ENCODE measurements at regions of chr5 and their contacts with region 1.

Region 1: GRCh38 chr5:107571621-107572536 is 98.9 kb downstream of the EFNA5 start:
- DNase-seq: peak; percentile 97
- H3K4me3 ChIP-seq: peak overlapping the region in 2 of 3 experiments; percentile 31 to 59
- H3K27ac ChIP-seq: peak overlapping the region; percentile 88
- H3K4me1 ChIP-seq: peaks cover 36% of the 10 kb centered on the region
- H3K27me3 ChIP-seq: no peaks in the 10 kb centered on the region
- CTCF ChIP-seq: peak; percentile 93 to 94
- POLR2A ChIP-seq: no peak

Region 2: GRCh38 chr5:106121972-106122605 is 1449.8 kb before region 1 on chr5:
- CTCF ChIA-PET with region 1: interaction called, 3 read pairs
- POLR2A ChIA-PET with region 1: no interaction called
- dilution Hi-C with region 1: no loop called
- intact Hi-C with region 1: loop called (anchors 2 kb)
- DNase-seq: no peak
- H3K4me3 ChIP-seq: no peak overlapping the region
- H3K27ac ChIP-seq: no peak overlapping the region
- H3K4me1 ChIP-seq: no peaks in the 10 kb centered on the region
- H3K27me3 ChIP-seq: no peaks in the 10 kb centered on the region
- CTCF ChIP-seq: peak; percentile 60 to 70
- POLR2A ChIP-seq: no peak

Region 3: DNA sequence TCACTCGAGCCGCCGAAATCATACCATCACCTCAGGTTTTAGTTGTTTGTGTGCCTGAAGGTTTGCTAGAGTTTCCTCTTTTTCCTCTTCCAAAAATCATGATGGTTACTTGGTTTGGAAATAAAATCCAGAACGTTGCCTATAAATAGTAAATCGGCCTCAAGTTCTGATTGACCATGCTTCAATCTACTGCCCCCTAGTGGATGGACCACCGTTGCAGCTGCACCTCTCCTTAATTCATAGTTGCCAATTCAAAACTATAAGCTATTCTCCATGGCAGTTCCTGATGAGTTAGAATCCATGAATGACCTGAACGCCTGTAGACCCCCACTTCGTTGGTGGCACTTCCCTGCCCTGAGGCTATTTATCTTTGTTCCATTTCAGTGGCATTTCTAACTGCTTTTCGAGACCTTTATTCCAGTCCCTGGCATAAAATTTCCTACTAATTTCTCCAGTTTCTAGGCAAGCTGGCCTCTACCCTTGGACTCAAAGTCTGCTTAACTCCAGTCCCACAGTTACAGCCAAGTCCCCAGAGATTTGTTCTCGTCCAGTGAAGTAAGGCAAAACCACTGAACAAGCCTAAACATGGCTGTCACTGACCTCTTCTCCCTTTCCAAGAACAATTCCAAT is 323.7 kb before region 1 on chr5:
- CTCF ChIA-PET with region 1: interaction called, 24 read pairs
- POLR2A ChIA-PET with region 1: no interaction called
- dilution Hi-C with region 1: no loop called
- intact Hi-C with region 1: loop called (anchors 1 kb)
- DNase-seq: peak; percentile 69
- H3K4me3 ChIP-seq: no peak overlapping the region
- H3K27ac ChIP-seq: no peak overlapping the region
- H3K4me1 ChIP-seq: no peaks in the 10 kb centered on the region
- H3K27me3 ChIP-seq: no peaks in the 10 kb centered on the region
- CTCF ChIP-seq: peak; percentile 77 to 79
- POLR2A ChIP-seq: no peak

Region 4: GRCh38 chr5:107322936-107323335 is 248.9 kb before region 1 on chr5:
- CTCF ChIA-PET with region 1: interaction called, 20 read pairs
- POLR2A ChIA-PET with region 1: no interaction called
- dilution Hi-C with region 1: no loop called
- intact Hi-C with region 1: loop called (anchors 1 kb)
- DNase-seq: peak; percentile 57
- H3K4me3 ChIP-seq: no peak overlapping the region
- H3K27ac ChIP-seq: no peak overlapping the region
- H3K4me1 ChIP-seq: peaks cover 24% of the 10 kb centered on the region
- H3K27me3 ChIP-seq: no peaks in the 10 kb centered on the region
- CTCF ChIP-seq: no peak
- POLR2A ChIP-seq: no peak

Region 5: DNA sequence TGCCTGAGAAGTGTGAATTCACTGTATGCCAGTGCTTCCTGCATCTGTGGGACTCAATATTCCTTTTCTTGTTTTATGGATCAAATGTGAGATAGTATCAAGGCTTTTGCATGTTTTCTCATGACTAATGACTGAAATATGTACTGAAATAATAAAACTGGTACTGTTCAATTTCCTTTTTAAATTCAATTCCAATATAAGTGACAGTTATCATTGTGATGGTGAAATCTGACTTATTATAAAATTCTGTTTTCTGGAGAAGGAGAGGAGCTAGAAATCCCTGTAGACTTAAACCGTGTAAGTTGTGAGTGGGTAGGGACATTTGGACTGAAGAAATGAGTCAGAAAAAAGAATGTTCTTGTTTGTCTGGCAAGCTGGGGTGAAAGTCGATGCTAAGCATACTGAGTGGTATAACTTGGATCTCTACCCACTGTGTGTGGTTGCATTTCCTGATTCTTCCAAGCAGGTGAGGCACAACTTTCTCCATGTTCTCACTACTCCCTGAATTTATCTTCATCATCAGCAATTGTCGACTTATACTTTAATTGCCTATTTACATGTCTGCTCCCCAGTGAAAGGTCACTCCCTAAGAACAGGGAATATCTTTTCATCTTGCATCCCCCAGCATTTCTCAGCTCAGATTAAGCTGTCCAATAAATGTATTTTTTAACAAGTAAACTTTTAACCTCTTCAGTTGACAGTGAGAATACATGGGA is 146.2 kb before region 1 on chr5:
- CTCF ChIA-PET with region 1: interaction called, 41 read pairs
- POLR2A ChIA-PET with region 1: no interaction called
- dilution Hi-C with region 1: no loop called
- intact Hi-C with region 1: loop called (anchors 1 kb)
- DNase-seq: peak; percentile 93
- H3K4me3 ChIP-seq: peak overlapping the region in 1 of 3 experiments; percentile 22
- H3K27ac ChIP-seq: peak overlapping the region; percentile 83
- H3K4me1 ChIP-seq: peaks cover 50% of the 10 kb centered on the region
- H3K27me3 ChIP-seq: no peaks in the 10 kb centered on the region
- CTCF ChIP-seq: no peak
- POLR2A ChIP-seq: peak; percentile 59

Region 6: DNA sequence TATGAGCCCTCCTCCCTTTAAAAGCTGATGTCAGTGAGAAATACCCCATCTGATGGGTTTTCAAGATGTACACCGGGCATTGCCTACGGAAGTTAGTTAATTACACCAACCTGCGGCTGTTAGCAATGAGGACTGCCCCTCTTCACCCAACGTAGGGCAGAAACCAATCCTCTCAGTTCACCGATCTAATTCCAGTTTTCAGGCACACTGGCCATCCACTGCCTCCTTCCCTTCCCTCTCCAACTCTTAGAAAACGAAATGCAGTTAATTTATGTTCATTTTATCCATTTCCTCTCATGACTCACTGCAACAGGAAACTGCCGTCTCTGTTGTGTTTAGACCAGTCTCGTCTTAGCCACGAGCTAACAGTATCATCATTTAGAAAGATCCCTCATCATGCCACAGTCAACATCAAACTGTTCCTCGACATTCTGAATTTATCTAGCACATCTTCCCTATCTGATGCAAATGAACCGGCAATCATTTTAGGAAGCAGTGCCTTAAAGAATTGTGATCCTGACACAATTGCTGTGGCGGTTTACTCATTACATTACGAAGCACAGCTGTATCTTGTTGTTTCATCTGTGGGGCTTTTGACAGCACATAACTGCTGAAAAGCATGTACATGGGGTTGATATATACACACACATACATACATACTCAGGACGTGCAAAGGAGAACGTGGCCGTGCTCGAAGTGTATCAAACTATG is 69.8 kb before region 1 on chr5:
- CTCF ChIA-PET with region 1: interaction called, 65 read pairs
- POLR2A ChIA-PET with region 1: no interaction called
- dilution Hi-C with region 1: no loop called
- intact Hi-C with region 1: loop called (anchors 1 kb)
- DNase-seq: peak; percentile 93
- H3K4me3 ChIP-seq: peak overlapping the region; percentile 43 to 90 (median 59)
- H3K27ac ChIP-seq: peak overlapping the region; percentile 97
- H3K4me1 ChIP-seq: peaks cover 24% of the 10 kb centered on the region
- H3K27me3 ChIP-seq: no peaks in the 10 kb centered on the region
- CTCF ChIP-seq: no peak
- POLR2A ChIP-seq: peak; percentile 86

Measured in endothelial cell of umbilical vein (primary cell).